ENCODE measurements at regions of chr14 and their contacts with region 1.

Region 1: GRCh38 chr14:77457522-77458290 is at the starts of genes AHSA1 and VIPAS39:
- DNase-seq: peak; percentile 95 to 99
- H3K4me3 ChIP-seq: peak within 1 kb of the TSS; percentile 87 to 98 (median 98)
- H3K27ac ChIP-seq: peak within 1 kb of the TSS; percentile 91 to 96 (median 93)
- H3K4me1 ChIP-seq: peaks cover 13 to 49% (median 35%) of the 10 kb centered on the region in 4 donors
- H3K27me3 ChIP-seq: no peaks in the 10 kb centered on the region
- CTCF ChIP-seq: peak in 1 of 7 experiments; percentile 18
- EP300 ChIP-seq: no peak
- POLR2A ChIP-seq: peak in 2 of 4 donors; percentile 44 to 54
- total RNA-seq, gene AHSA1: 47.2 to 109 (median 76.4) TPM
- total RNA-seq, gene VIPAS39: 7.2 to 53.1 (median 20.2) TPM

Region 2: GRCh38 chr14:77320238-77320935 is 137.3 kb before region 1 on chr14 and contains the start of gene POMT2:
- intact Hi-C with region 1: loop called (anchors 10 kb)
- DNase-seq: peak; percentile 95 to 97
- H3K4me3 ChIP-seq: peak within 1 kb of the TSS; percentile 95 to 100 (median 99)
- H3K27ac ChIP-seq: peak within 1 kb of the TSS; percentile 95 to 98 (median 96)
- H3K4me1 ChIP-seq: peaks cover 26 to 51% (median 37%) of the 10 kb centered on the region in 4 donors
- H3K27me3 ChIP-seq: no peaks in the 10 kb centered on the region
- CTCF ChIP-seq: peak in 4 of 7 experiments; percentile 37 to 78 (median 44)
- EP300 ChIP-seq: no peak
- POLR2A ChIP-seq: no peak
- total RNA-seq, gene POMT2: 8.3 to 33.8 (median 17.9) TPM

Region 3: DNA sequence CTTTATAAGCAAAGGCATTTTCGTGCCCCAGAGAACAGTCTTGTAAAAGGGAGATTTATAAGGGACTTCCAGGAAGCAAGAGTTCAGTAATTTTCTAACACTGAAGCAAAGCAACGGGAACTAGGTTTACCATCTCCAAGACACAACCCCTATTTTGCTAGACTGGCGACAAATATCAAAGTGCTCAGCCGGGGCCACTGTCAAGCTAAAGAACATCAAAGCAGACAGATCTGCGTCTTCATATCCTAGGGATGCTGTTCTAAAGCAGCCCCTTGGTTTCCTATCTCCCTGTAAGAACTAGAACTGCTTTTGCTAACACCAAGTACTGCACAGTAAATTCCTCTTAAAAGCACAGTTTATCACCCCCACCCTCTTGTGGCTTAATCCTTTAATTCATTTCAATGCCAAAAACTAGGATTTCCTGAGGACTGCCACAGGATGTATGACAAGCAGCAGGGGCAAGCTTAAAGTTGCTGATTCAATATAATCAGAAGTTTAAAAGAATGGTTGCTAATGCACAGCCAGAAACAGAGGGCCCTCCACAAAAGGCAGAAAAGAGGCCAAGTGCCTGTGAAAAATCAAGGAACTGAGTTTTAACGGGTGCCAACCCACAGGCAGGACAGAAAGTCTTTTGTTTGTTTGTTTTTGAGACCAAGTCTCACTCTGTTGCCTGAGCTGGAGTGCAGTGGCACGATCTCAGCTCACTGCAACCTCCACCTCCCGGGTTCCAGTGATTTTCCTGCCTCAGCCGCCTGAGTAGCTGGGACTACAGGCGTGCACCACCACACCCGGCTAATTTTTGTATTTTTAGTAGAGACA is 84.9 kb after region 1 on chr14:
- intact Hi-C with region 1: loop called (anchors 10 kb)
- DNase-seq: peak in 1 of 2 donors; percentile 22
- H3K4me3 ChIP-seq: no peak overlapping the region
- H3K27ac ChIP-seq: peak overlapping the region in 4 of 5 donors; percentile 4 to 62 (median 60)
- H3K4me1 ChIP-seq: peaks cover 12 to 37% (median 21%) of the 10 kb centered on the region in 4 donors
- H3K27me3 ChIP-seq: no peaks in the 10 kb centered on the region
- CTCF ChIP-seq: no peak
- EP300 ChIP-seq: no peak
- POLR2A ChIP-seq: no peak